Left ventricle myocardium superior (tissue), 1 donor: ENCODE measurements at regions of chr18 and their contacts with region 1.

Region 1: GRCh38 chr18:6482198-6482977 is 67.7 kb upstream of the L3MBTL4 start:
- DNase-seq: peak; percentile 85
- ATAC-seq: peak; percentile 100

Region 2: DNA sequence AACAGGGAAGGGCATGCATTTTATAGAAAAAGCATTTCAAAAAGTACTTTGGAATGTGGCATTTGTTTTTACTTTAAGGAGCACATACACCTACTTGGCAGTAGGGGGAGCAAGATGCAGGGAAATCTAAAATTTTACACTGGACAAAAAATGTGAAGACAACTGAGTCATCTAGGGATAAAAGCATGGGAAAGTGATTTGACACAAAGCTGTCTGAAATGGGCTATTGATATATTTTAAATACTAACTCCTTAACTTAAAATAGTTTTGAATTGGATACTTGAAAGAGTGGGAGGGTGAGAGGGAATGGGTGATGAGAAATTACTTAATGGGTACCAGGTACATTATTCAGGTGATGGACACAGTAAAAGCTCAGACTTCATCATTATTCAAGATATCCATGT is 602.9 kb before region 1 on chr18:
- intact Hi-C with region 1: loop called (anchors 5 kb)
- DNase-seq: no peak
- ATAC-seq: no peak